GM10248 (cell line): ENCODE measurements at regions of chr15 and their contacts with region 1.

Region 1: DNA sequence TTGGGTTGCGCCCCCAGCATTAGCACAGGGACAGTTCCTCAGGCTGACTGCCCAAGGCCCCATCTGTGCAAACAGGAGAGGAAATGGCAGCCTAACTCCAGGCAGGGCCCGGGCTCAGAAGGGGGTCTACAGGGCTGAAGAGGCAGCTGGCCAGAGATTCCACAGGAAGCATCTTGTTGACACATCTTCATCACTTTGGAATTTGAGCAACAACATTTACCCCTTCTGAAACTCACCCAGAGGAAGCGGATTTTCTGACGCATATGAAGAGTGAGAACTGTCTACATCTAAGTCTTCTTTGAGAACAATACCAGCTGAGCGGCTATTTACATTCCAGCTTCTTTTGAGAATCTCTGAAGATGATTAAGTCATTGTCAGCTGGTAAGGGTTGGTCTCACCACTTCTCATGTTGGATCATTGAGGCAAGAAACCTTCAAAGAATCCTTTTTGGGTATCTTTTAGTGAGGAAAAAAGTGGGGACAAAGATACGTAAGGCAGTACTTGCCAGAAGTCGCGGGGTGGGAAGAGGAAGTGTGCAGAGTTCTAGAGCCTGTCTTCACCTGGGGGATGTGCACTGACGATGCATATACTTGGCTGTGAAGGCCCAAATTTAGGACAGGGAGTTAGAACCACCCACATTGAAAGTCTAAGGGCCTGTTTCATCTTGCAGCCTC is 25.4 kb upstream of the SRP14 start:
- DNase-seq: peak; percentile 67
- CTCF ChIP-seq: no peak

Region 2: GRCh38 chr15:39782441-39783138 is 281.8 kb before region 1 on chr15 and contains the start of gene FSIP1:
- CTCF ChIA-PET with region 1: no interaction called
- POLR2A ChIA-PET with region 1: no interaction called
- DNase-seq: peak; percentile 99
- CTCF ChIP-seq: no peak

Region 3: GRCh38 chr15:40098489-40099261 is 34.3 kb after region 1 on chr15:
- CTCF ChIA-PET with region 1: interaction called, 85 read pairs
- POLR2A ChIA-PET with region 1: interaction called, 3 read pairs
- DNase-seq: peak; percentile 88
- CTCF ChIP-seq: no peak